ENCODE measurements at regions of chr4 and their contacts with region 1.

Region 1: GRCh38 chr4:123898946-123899666 is 502.5 kb downstream of the SPRY1 start:
- DNase-seq: no peak
- ATAC-seq: no peak
- H3K4me3 ChIP-seq: no peak overlapping the region
- H3K27ac ChIP-seq: no peak overlapping the region
- H3K4me1 ChIP-seq: no peaks in the 10 kb centered on the region
- H3K27me3 ChIP-seq: no peaks in the 10 kb centered on the region
- CTCF ChIP-seq: no peak

Region 2: DNA sequence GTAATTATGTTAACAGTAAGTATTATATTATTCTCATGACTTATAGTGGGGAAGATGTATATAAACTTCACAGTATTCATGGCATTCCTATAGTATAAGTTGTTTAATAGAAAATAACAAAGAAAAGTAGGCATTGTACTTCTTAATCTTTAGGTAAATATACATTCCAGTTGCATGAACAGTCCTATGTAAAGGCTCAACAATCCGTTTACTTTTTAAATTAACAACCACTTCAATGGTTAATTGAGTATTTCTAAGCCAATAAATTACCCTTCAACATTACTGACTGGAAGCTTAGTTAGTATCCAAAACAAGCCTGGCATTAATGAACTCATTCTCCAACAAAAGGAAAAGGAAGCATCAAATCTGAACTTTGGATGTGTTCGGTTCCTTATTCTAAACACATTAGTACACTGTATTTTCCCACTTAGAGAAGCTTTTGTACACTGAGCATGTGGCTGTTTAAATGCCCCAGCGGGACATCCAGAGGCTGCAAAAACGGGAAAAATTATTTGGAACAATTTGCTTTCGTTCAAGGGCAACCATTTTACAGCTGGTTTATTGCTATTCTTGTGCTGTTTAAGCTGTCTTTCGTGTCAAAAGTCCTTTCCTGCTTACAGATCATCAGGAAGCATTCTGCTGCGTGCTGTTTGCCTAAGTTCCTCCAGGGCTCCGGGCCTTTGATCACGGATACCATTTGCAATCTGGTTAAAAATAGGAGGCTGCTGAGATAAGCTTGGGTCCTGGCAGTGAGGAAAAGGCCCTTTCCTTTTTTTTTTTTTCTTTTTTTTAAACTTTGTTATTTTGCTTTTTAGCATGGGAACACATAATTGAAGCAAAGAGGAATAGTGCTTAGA is 42.2 kb before region 1 on chr4:
- CTCF ChIA-PET with region 1: no interaction called
- POLR2A ChIA-PET with region 1: no interaction called
- intact Hi-C with region 1: no loop called
- DNase-seq: peak; percentile 33
- ATAC-seq: peak; percentile 75
- H3K4me3 ChIP-seq: peak overlapping the region; percentile 52; the same call in 1 of the 2 replicates
- H3K27ac ChIP-seq: no peak overlapping the region
- H3K4me1 ChIP-seq: peaks cover 10% of the 10 kb centered on the region; the same call in 1 of the 2 replicates
- H3K27me3 ChIP-seq: no peaks in the 10 kb centered on the region
- CTCF ChIP-seq: no peak

Region 3: DNA sequence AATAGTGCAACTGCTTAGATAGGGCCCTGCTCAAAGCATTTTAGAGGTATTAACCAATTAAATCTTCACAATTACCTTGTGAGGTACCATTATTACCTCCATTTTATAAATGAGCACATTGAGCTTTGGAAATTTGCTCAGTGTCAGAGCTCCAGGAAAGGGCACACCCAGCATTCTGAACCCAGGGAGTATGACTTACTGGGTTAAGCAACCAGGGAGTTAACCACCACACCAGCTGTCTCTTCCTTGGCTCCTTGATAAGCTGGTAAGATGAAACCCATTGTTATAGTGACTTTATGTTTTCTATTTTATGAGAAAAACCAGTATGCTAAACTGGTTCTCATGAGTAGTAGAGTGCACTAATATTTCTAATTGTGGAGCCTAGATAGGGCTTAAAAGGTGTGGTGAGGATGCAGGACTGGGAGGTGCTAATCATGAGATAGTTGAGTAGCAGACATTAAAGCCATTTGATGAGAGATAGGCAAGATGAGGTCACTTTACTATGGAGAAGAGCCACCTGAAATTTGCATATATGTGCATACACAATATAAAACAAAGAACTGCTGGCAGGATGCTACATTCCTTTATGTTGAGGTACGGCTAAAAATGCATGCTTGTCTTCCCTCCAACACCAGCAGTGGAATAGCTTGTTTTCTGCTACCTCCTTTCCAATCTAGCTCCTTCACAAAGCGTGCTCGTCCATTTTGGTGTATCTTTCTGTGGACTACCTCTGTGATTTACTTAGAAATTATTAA is 53.6 kb after region 1 on chr4:
- CTCF ChIA-PET with region 1: no interaction called
- POLR2A ChIA-PET with region 1: interaction called, 28 read pairs
- intact Hi-C with region 1: no loop called
- DNase-seq: peak; percentile 28
- ATAC-seq: no peak
- H3K4me3 ChIP-seq: no peak overlapping the region
- H3K27ac ChIP-seq: no peak overlapping the region
- H3K4me1 ChIP-seq: peaks cover 15% of the 10 kb centered on the region; the same call in 1 of the 2 replicates
- H3K27me3 ChIP-seq: no peaks in the 10 kb centered on the region
- CTCF ChIP-seq: no peak